Heart right ventricle (tissue), 16 donors: ENCODE measurements at regions of chr21 and their contacts with region 1.

Region 1: DNA sequence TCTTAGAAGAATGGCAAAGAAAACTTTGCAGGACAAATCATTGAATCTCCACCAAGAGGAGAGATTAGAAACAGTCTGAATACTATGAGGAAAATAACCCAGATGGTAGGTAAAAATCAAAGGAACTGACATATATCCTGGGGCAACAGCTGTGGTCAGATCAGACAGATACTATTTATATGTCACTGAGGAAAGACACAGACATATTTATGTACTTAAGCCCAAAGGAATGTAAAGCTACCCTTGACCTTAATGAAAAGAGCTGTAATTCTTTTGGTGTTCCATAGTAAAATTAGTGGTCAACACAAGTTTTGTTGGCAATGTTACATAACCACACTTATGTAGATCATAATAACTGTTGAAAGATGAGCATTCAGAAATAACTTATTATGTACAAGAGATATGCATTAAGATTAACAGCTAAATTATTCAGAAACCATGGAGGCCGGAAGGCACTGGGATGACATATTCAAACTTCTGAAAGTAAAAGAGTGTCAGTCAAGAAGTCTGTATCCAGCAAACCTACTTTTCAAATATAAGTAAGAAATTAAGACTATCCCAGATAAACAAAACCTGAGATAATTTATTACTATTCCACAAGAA is 166.1 kb upstream of the SAMSN1 start:
- DNase-seq: no peak
- ATAC-seq: no peak
- H3K4me3 ChIP-seq: no peak overlapping the region
- H3K27ac ChIP-seq: no peak overlapping the region
- H3K4me1 ChIP-seq: no peaks in the 10 kb centered on the region
- H3K27me3 ChIP-seq: no peaks in the 10 kb centered on the region
- CTCF ChIP-seq: no peak

Region 2: GRCh38 chr21:15992171-15992570 is 1279.9 kb after region 1 on chr21:
- intact Hi-C with region 1: loop called in 1 of 10 experiments (anchors 5 kb)
- DNase-seq: no peak
- ATAC-seq: no peak
- H3K4me3 ChIP-seq: no peak overlapping the region
- H3K27ac ChIP-seq: no peak overlapping the region
- H3K4me1 ChIP-seq: no peaks in the 10 kb centered on the region
- H3K27me3 ChIP-seq: no peaks in the 10 kb centered on the region
- CTCF ChIP-seq: no peak